GM10248 (cell line): ENCODE measurements at regions of chr13 and their contacts with region 1.

Region 1: DNA sequence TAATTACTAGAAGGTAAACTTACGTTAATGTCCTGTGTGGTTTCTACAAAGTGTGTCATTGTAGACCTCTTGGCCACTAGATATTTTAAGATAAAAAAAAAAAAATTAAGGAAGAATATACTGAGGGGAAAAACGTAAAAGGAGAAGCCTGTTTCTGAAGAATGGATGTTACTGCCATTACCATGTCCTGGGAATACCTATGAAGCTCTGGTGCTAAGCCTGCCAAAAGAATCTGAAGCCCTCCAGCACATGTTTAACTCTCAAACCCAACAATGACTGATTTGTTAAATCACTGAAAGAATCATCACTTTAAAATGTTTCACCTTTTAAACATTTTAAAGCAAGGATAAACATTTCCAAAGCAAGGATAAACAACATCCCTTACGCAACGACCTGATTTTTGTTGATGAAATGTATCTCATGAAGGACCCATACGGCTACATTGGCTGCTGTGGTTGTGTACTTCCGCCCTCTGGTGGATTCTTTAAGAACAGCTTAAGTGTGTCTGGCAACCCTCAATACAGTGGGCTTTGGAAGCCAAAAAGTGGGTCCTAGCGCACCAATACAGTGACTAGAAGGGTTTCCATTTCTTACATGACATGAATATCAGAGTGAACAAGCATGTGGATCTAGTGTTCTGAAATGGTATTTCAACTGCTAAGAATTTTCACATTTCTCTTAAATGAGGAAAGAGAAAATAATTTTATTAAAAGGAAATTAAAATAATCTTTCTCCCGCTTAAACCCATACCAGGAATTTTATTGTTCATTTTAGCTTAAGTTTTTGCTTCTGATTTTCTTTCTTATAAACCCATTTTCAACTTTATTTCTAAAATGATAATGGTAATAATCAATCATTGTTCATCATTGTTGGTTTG is 74.5 kb upstream of the RAP2A start:
- DNase-seq: peak; percentile 37
- CTCF ChIP-seq: peak; percentile 78

Region 2: DNA sequence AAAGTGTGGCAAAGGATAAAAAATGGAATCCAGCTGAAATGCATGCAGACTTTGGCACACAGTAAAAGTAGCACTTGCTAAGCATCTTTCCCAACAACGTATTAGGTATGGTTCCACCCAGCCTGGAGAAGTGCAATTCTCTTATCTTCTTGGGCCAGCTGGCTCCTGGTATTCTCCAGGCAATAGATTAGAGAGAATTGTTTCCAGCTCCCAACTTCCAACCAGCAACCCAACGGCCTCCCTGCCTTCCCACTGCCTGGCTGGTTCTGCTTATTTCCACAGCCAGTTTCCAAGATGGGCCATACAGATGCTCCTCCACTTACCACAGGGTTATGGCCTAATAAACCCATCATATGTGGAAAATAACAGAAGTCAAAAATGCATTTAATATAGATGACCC is 498.5 kb before region 1 on chr13:
- CTCF ChIA-PET with region 1: no interaction called
- POLR2A ChIA-PET with region 1: no interaction called
- DNase-seq: no peak
- CTCF ChIP-seq: no peak

Region 3: DNA sequence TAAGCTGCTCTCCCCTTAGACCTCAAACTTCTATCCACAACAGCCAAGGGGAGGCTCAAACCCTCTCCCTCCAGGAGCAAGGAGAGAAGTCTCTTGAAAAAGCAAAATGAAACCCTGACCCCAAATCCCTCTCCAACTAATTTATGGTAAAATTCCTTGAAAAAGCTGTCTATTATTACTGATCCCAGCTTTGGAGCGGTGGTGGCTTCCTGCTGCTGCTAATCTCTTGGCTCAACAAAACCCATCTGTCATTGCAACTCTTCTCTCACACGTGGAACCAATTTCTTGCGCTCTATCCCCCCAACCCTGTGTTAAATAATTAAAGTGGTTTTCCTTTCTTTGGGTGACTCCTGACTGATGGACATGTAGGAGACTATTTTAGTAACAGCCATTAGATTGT is 301.0 kb before region 1 on chr13:
- CTCF ChIA-PET with region 1: no interaction called
- POLR2A ChIA-PET with region 1: no interaction called
- DNase-seq: no peak
- CTCF ChIP-seq: no peak

Region 4: DNA sequence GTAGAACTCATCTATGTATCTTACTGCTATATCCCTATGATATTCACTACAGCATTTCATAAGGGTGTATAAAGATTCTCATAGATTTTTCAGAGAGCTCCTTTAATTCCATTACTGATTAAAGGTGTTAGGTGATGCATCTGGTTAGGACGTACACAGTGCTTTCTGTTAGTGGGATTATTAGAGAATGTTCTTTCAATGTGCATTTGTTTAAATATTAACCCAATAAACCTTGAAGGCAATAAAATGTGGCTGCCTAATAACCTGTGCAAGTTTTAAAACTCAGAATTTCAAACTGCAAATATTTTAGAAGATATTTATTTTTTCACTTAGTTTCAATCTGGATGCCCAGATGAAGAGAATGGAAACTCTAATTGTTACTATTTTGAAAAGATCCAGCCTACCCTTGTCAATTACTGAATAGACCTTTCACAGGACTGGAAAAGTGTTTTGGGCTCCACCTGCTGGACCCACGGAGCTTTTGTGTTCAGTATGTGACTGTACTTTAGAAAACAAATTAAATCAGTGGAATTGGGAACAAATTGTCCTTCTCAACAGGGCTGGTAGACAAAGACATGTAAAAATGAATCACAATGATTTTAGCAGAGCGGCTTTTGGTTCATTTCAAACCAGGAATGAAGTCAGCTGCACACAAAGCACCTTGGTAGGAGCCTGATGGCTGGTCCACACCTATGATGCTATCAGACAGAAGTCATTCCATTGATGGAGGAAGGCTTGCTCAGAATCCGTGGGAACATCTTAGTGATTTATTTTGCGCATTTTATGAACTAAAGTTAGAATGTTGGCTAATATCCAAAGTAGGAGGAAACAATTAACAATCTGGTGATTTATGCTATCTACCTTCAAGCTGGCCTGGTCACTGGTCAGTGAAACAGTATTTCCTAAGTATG is 14.9 kb before region 1 on chr13:
- CTCF ChIA-PET with region 1: interaction called, 35 read pairs
- POLR2A ChIA-PET with region 1: no interaction called
- DNase-seq: peak; percentile 32
- CTCF ChIP-seq: peak; percentile 60

Region 5: GRCh38 chr13:97376981-97377380 is 17.6 kb after region 1 on chr13:
- CTCF ChIA-PET with region 1: interaction called, 16 read pairs
- POLR2A ChIA-PET with region 1: no interaction called
- DNase-seq: no peak
- CTCF ChIP-seq: no peak